Left ventricle myocardium inferior (tissue), 1 donor: ENCODE measurements at regions of chr2 and their contacts with region 1.

Region 1: DNA sequence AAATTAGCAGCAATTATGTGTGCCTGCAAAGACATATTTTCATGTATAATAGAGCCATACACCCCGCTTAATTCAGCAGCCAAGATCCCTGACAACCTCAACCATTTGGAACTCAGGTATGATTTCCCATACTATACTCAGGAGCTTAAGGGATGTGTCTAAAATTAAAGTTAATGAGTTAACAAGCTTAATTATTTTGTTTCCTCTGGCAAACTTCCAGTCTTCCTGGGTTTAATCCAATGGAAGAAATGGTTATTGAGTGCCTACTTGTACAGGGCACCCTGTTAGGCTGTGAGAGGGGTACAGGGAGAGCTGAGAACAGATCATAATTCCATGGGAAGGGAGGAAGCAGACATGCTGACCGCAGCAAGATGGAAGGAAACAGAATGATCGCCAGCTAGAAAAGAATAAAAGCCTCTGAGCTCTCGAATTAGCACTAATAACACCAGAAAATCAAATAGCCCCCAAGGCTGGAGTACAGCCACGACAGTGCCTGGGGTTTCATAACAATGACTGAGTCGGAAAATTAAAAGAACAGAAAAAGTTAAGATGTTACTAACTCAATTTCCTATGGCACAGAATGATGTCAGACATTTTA is 20.8 kb upstream of the CEP68 start:
- DNase-seq: no peak
- H3K4me3 ChIP-seq: no peak overlapping the region
- H3K27ac ChIP-seq: no peak overlapping the region
- H3K4me1 ChIP-seq: peaks cover 12% of the 10 kb centered on the region
- H3K27me3 ChIP-seq: no peaks in the 10 kb centered on the region
- CTCF ChIP-seq: no peak

Region 2: GRCh38 chr2:64914735-64915509 is 120.5 kb before region 1 on chr2:
- intact Hi-C with region 1: loop called (anchors 5 kb)
- DNase-seq: peak; percentile 29
- H3K4me3 ChIP-seq: no peak overlapping the region
- H3K27ac ChIP-seq: peak overlapping the region; percentile 22
- H3K4me1 ChIP-seq: peaks cover 16% of the 10 kb centered on the region
- H3K27me3 ChIP-seq: no peaks in the 10 kb centered on the region
- CTCF ChIP-seq: no peak